Naive thymus-derived CD4-positive, alpha-beta T cell (primary cell): ENCODE measurements at regions of chr10 and their contacts with region 1.

Region 1: GRCh38 chr10:103542764-103543616 is 49.5 kb downstream of the NEURL1 start:
- DNase-seq: peak in 4 of 9 donors; percentile 28 to 43 (median 34)
- ATAC-seq: peak; percentile 54
- H3K4me3 ChIP-seq: peak overlapping the region; percentile 54
- H3K4me3 Mint-ChIP-seq: peak overlapping the region; percentile 70 to 91 (median 84)
- H3K27ac ChIP-seq: no peak overlapping the region
- H3K27ac Mint-ChIP-seq: peak overlapping the region in 7 of 9 donors; percentile 2 to 76 (median 46)
- H3K4me1 ChIP-seq: peaks cover 0 to 10% of the 10 kb centered on the region in 2 donors
- H3K4me1 Mint-ChIP-seq: peaks cover 4 to 15% (median 10%) of the 10 kb centered on the region in 7 donors
- H3K27me3 ChIP-seq: no peaks in the 10 kb centered on the region
- H3K27me3 Mint-ChIP-seq: peaks cover 16 to 22% (median 18%) of the 10 kb centered on the region in 5 donors

Region 2: GRCh38 chr10:103507235-103508191 is 35.5 kb before region 1 on chr10:
- CTCF ChIA-PET with region 1: no interaction called
- POLR2A ChIA-PET with region 1: no interaction called
- intact Hi-C with region 1: loop called in 1 of 2 experiments (anchors 5 kb)
- DNase-seq: no peak
- ATAC-seq: no peak
- H3K4me3 ChIP-seq: no peak overlapping the region
- H3K4me3 Mint-ChIP-seq: no peak overlapping the region
- H3K27ac ChIP-seq: no peak overlapping the region
- H3K27ac Mint-ChIP-seq: no peak overlapping the region
- H3K4me1 ChIP-seq: peaks cover 0 to 9% of the 10 kb centered on the region in 2 donors
- H3K4me1 Mint-ChIP-seq: peaks cover 5 to 14% (median 6%) of the 10 kb centered on the region in 7 donors
- H3K27me3 ChIP-seq: no peaks in the 10 kb centered on the region
- H3K27me3 Mint-ChIP-seq: peaks cover 0 to 54% (median 11%) of the 10 kb centered on the region in 5 donors